Left ventricle myocardium inferior (tissue), 1 donor: ENCODE measurements at regions of chr20 and their contacts with region 1.

Region 1: GRCh38 chr20:53157443-53158408 is 185.6 kb downstream of the TSHZ2 start:
- DNase-seq: no peak
- H3K4me3 ChIP-seq: no peak overlapping the region
- H3K27ac ChIP-seq: no peak overlapping the region
- H3K4me1 ChIP-seq: no peaks in the 10 kb centered on the region
- H3K27me3 ChIP-seq: no peaks in the 10 kb centered on the region
- CTCF ChIP-seq: peak; percentile 54

Region 2: GRCh38 chr20:53547664-53548239 is 390.0 kb after region 1 on chr20:
- intact Hi-C with region 1: loop called (anchors 5 kb)
- DNase-seq: no peak
- H3K4me3 ChIP-seq: no peak overlapping the region
- H3K27ac ChIP-seq: no peak overlapping the region
- H3K4me1 ChIP-seq: peaks cover 9% of the 10 kb centered on the region
- H3K27me3 ChIP-seq: no peaks in the 10 kb centered on the region
- CTCF ChIP-seq: peak; percentile 88